ENCODE measurements at regions of chr11 and their contacts with region 1.

Region 1: GRCh38 chr11:62560566-62561103 is 13.1 kb downstream of the EEF1G start:
- DNase-seq: peak; percentile 77
- ATAC-seq: peak; percentile 83

Region 2: DNA sequence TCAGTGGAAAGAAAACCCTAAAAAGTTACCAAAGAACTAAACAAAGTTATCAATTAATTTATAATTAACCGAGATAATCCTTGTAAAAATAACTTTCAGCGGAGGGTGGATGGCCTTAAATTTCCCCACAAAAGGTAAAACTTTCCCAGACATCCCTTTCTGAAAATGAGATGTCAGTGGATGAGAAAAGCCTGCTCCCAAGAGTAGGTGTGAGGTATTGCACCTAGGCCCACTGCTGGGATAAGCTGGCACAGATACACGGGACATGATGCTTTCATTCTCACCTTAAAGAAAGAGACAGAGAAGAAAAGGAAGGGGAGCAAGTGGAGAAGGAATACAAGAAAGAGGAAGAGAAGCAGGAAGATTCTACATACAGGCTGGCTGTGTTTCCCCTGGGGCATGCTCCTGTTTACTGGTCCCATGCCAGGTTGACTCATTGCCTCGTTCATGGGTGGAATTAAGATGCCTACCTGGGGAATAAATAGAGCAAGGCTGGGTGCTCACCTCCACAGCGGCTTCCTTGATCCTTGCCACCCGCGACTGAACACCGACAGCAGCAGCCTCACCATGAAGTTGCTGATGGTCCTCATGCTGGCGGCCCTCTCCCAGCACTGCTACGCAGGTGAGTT is 290.9 kb before region 1 on chr11 and contains the start of gene SCGB2A2:
- intact Hi-C with region 1: no loop called
- DNase-seq: no peak
- ATAC-seq: no peak
- total RNA-seq, gene SCGB2A2: not detected

Region 3: DNA sequence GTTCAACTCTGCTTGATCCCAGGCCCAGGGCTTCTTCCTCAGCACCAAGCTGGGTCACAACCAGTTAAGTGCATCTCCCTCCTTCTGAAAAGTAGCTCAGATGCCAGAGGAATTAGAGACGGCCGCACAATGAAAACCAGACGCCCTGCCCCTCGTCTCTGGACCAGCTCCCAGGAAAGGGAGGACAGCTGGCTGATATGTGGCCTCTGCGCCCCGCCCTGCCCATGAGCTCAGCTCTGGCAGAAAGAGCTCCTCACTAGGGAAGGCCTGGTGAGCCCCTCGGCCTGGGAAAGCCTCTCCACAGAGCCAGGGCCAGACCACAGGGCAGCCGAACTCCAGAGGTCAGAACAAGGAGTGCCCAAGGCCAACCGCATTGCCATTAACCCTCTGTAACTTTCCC is 159.9 kb before region 1 on chr11:
- intact Hi-C with region 1: loop called (anchors 2 kb)
- DNase-seq: peak; percentile 90
- ATAC-seq: peak; percentile 86

Region 4: GRCh38 chr11:62427630-62428233 is 132.9 kb before region 1 on chr11:
- intact Hi-C with region 1: loop called (anchors 1 kb)
- DNase-seq: no peak
- ATAC-seq: no peak

Region 5: GRCh38 chr11:62497132-62497915 is 63.3 kb before region 1 on chr11:
- intact Hi-C with region 1: loop called (anchors 1 kb)
- DNase-seq: no peak
- ATAC-seq: peak; percentile 45

Region 6: GRCh38 chr11:62577151-62577699 is 16.6 kb after region 1 on chr11:
- intact Hi-C with region 1: no loop called
- DNase-seq: no peak
- ATAC-seq: no peak

Measured in Right ventricle myocardium inferior (tissue), 1 donor.